Transverse colon (tissue), 4 donors: ENCODE measurements at regions of chr16 and their contacts with region 1.

Region 1: GRCh38 chr16:66801320-66802105 is at the start of gene TERB1:
- DNase-seq: no peak
- H3K4me3 ChIP-seq: no peak within 1 kb of the TSS
- H3K27ac ChIP-seq: no peak within 1 kb of the TSS
- H3K4me1 ChIP-seq: no peaks in the 10 kb centered on the region
- H3K27me3 ChIP-seq: no peaks in the 10 kb centered on the region
- CTCF ChIP-seq: no peak
- EP300 ChIP-seq: no peak
- POLR2A ChIP-seq: no peak
- total RNA-seq, gene TERB1: 0.32 TPM in 1 of 4 donors, not detected in the others

Region 2: GRCh38 chr16:66751303-66751991 is 50.1 kb before region 1 on chr16 and contains the start of gene DYNC1LI2:
- in situ Hi-C with region 1: no loop called
- intact Hi-C with region 1: no loop called
- DNase-seq: peak; percentile 77
- H3K4me3 ChIP-seq: peak within 1 kb of the TSS; percentile 95 to 100 (median 98)
- H3K27ac ChIP-seq: peak within 1 kb of the TSS; percentile 92 to 98 (median 95)
- H3K4me1 ChIP-seq: peaks cover 17 to 47% (median 34%) of the 10 kb centered on the region in 4 donors
- H3K27me3 ChIP-seq: no peaks in the 10 kb centered on the region
- CTCF ChIP-seq: peak; percentile 53 to 91 (median 78)
- EP300 ChIP-seq: no peak
- POLR2A ChIP-seq: peak; percentile 34
- total RNA-seq, gene DYNC1LI2: 199 to 393 (median 284) TPM

Region 3: GRCh38 chr16:66830422-66831404 is 29.2 kb after region 1 on chr16 and contains the start of gene NAE1:
- in situ Hi-C with region 1: no loop called
- intact Hi-C with region 1: no loop called
- DNase-seq: peak; percentile 90
- H3K4me3 ChIP-seq: peak within 1 kb of the TSS; percentile 71 to 95 (median 90)
- H3K27ac ChIP-seq: peak within 1 kb of the TSS; percentile 91 to 95 (median 94)
- H3K4me1 ChIP-seq: peaks cover 6 to 18% (median 12%) of the 10 kb centered on the region in 4 donors
- H3K27me3 ChIP-seq: no peaks in the 10 kb centered on the region
- CTCF ChIP-seq: peak; percentile 83 to 99 (median 98)
- EP300 ChIP-seq: no peak
- POLR2A ChIP-seq: peak; percentile 87
- total RNA-seq, gene NAE1: 25.3 to 45.1 (median 32.1) TPM

Region 4: GRCh38 chr16:66849543-66849942 is 48.0 kb after region 1 on chr16:
- in situ Hi-C with region 1: no loop called
- intact Hi-C with region 1: loop called (anchors 2 kb)
- DNase-seq: no peak
- H3K4me3 ChIP-seq: no peak overlapping the region
- H3K27ac ChIP-seq: no peak overlapping the region
- H3K4me1 ChIP-seq: peaks cover 0 to 8% (median 6%) of the 10 kb centered on the region in 4 donors
- H3K27me3 ChIP-seq: peaks cover 22% of the 10 kb centered on the region
- CTCF ChIP-seq: no peak
- EP300 ChIP-seq: no peak
- POLR2A ChIP-seq: no peak

Region 5: GRCh38 chr16:66911112-66911511 is 109.6 kb after region 1 on chr16:
- in situ Hi-C with region 1: no loop called
- intact Hi-C with region 1: no loop called
- DNase-seq: no peak
- H3K4me3 ChIP-seq: no peak overlapping the region
- H3K27ac ChIP-seq: no peak overlapping the region
- H3K4me1 ChIP-seq: peaks cover 0 to under 1% (median 0%) of the 10 kb centered on the region in 4 donors
- H3K27me3 ChIP-seq: no peaks in the 10 kb centered on the region
- CTCF ChIP-seq: no peak
- EP300 ChIP-seq: no peak
- POLR2A ChIP-seq: no peak